AG04450 (cell line): ENCODE measurements at regions of chr22 and their contacts with region 1.

Region 1: DNA sequence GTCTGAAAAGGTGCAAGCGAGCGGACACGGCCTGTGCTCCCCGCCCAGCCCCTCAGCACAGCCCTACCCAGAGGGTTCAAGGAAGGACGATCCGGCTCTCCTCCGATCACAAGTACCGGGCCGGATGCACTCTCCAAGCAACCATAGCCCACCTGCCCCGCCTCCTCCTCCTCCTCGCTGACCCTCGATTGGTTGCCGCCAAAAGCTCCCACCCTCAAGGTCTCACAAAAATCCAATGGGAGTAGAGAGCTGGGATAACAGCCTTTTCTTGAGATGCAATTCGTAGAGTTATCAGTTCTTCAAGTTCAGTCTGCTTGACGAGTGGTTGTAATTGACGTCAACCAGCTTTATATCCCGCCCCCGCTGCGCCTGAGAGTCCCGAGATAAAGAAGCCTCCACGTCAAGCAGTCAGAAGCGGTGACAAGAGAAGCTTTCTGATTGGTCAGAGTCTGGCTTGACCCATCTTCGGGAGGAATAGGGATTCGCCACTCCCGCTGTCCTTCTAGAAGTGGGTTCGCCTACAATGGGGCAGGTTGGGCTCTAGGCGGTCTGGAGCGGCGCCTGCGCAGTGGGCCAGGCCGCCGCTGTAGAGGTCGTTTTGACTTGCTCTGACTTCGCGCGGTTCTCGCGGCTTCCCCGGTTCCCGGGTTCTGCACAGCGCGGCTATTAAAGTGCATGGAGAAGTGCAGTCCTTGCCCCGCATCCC is at the start of gene IFT27:
- DNase-seq: peak; percentile 100
- H3K4me3 ChIP-seq: peak within 1 kb of the TSS; percentile 80
- H3K27ac ChIP-seq: peak within 1 kb of the TSS; percentile 31
- H3K27me3 ChIP-seq: no peaks in the 10 kb centered on the region
- CTCF ChIP-seq: no peak
- polyA plus RNA-seq, gene IFT27: 22.5 and 25.5 TPM in 2 replicates

Region 2: DNA sequence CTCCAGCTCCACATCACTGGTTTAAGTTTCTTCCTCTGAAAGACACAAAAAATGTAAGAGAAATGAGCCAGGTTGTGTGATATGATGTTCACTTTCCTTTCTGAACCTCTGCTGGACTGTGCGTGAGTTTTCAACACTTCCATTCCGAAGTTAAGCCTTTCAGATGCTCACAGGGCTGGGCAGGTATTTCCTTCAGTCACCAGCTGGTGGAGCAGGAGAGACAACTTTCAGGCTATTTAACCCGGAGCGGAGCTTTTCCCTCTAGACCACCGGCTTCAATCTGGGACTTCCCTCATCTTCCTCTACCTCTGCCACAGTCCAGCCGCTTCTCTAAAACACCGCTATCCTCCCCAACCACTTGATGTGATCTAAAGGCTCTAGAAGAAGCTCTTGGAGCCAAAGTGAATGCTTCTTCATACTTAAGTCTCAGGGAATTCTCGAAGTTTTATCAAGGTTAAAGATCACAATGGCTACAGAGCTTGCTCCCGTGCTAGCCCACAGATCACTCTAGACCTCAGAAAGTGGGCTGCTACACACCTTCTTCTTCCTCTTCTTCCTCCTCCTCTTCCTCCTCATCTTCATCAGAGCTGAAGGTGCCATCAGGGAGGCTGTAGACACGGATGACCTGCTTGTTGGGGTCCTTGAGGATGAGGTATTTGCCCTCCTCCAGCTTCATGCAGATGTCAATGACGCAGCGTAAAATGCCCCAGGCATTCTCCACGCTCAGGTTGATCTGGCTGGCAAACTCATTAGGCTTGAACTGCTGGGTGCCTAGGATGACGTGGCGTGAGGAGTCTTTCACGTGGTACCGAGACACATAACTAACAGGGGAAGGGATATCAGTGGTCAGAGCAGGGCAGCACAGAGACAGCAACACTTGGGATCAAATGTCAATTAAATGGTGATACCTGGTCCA is 264.9 kb before region 1 on chr22:
- CTCF ChIA-PET with region 1: interaction called, 20 read pairs
- POLR2A ChIA-PET with region 1: interaction called, 6 read pairs
- DNase-seq: peak; percentile 24
- H3K4me3 ChIP-seq: no peak overlapping the region
- H3K27ac ChIP-seq: no peak overlapping the region
- H3K27me3 ChIP-seq: no peaks in the 10 kb centered on the region
- CTCF ChIP-seq: peak; percentile 81

Region 3: DNA sequence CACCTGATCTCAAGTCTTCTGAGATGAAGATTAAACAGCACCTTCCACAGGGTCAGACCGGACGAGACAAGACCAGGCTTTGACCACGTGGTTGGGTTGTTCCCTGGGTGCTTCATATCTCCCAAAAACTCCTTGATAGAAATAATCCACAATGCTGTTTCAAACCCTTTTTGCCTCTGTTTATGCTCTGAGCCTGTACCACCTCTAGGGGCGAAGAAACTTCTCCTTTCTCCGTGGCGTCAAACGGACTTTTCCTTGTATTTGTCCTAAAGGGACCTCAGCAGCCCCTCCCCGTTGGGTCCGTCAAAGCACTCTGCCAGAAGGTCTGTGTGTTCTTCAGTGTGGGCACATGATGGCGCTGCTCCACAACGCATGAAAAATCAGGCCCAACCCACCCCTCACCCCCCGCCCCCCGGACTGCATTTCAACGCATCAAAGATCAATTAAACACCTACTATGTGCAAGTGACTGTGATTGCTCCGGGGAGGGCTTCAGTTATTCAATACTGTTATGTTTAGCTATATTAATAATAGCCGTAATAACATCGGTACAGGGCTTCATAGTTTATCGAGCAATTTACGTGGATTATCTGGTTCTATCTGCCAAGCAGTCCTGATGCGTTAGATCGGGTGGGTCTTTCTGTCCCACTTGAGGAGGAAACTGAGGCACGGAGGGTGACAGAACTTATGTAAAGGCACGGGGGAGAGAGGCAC is 229.9 kb before region 1 on chr22:
- CTCF ChIA-PET with region 1: interaction called, 38 read pairs
- POLR2A ChIA-PET with region 1: interaction called, 3 read pairs
- DNase-seq: no peak
- H3K4me3 ChIP-seq: no peak overlapping the region
- H3K27ac ChIP-seq: no peak overlapping the region
- H3K27me3 ChIP-seq: peaks cover 10% of the 10 kb centered on the region
- CTCF ChIP-seq: peak; percentile 58

Region 4: GRCh38 chr22:36757668-36758211 is 18.4 kb before region 1 on chr22:
- CTCF ChIA-PET with region 1: interaction called, 121 read pairs
- POLR2A ChIA-PET with region 1: interaction called, 10 read pairs
- DNase-seq: peak; percentile 38
- H3K4me3 ChIP-seq: no peak overlapping the region
- H3K27ac ChIP-seq: no peak overlapping the region
- H3K27me3 ChIP-seq: peaks cover 9% of the 10 kb centered on the region
- CTCF ChIP-seq: peak; percentile 83

Region 5: GRCh38 chr22:36762687-36763260 is 13.3 kb before region 1 on chr22:
- CTCF ChIA-PET with region 1: interaction called, 121 read pairs
- POLR2A ChIA-PET with region 1: interaction called, 10 read pairs
- DNase-seq: peak; percentile 84
- H3K4me3 ChIP-seq: no peak overlapping the region
- H3K27ac ChIP-seq: peak overlapping the region; percentile 57
- H3K27me3 ChIP-seq: no peaks in the 10 kb centered on the region
- CTCF ChIP-seq: no peak